ENCODE measurements at regions of chr6 and their contacts with region 1.

Region 1: GRCh38 chr6:131199568-131200272 is 64.5 kb downstream of the AKAP7 start:
- DNase-seq: peak; percentile 29 to 92 (median 80)
- ATAC-seq: peak; percentile 95
- H3K4me3 Mint-ChIP-seq: peak overlapping the region; percentile 72 to 88 (median 81)
- H3K27ac Mint-ChIP-seq: peak overlapping the region; percentile 92 to 99 (median 98)
- H3K4me1 Mint-ChIP-seq: peaks cover 32 to 61% (median 58%) of the 10 kb centered on the region in 4 donors
- H3K27me3 Mint-ChIP-seq: no peaks in the 10 kb centered on the region

Region 2: DNA sequence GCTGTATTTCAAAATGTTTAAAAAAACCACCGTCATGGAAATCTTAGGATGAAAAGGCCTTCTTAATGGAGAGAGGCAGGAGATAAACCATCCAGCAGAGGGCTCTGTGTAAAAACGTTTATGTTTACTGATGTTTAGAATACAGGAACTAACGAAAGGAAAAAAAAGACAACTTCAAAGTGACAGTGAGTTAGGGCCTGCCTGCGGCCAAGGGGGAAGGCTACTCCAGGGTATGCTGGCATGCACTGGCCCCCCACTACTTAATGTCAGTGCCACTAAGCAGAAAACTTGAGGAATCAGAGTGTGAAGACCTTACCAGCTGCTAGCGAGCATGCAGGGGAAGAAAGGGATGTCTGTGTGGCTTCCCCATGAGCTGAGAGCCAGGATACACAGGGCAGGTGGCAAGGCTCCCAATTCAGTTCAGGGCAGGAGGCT is 16.7 kb before region 1 on chr6:
- POLR2A ChIA-PET with region 1: interaction called, 49 read pairs
- DNase-seq: peak in 6 of 10 donors; percentile 22 to 63 (median 48)
- ATAC-seq: peak; percentile 71 to 93
- H3K4me3 Mint-ChIP-seq: peak overlapping the region; percentile 61 to 88 (median 78)
- H3K27ac Mint-ChIP-seq: peak overlapping the region; percentile 76 to 99 (median 91)
- H3K4me1 Mint-ChIP-seq: peaks cover 7 to 12% (median 11%) of the 10 kb centered on the region in 4 donors
- H3K27me3 Mint-ChIP-seq: no peaks in the 10 kb centered on the region

Region 3: GRCh38 chr6:131257104-131257503 is 57.4 kb after region 1 on chr6:
- POLR2A ChIA-PET with region 1: no interaction called
- DNase-seq: no peak
- ATAC-seq: no peak
- H3K4me3 Mint-ChIP-seq: no peak overlapping the region
- H3K27ac Mint-ChIP-seq: peak overlapping the region in 3 of 10 donors; percentile 43 to 85 (median 58)
- H3K4me1 Mint-ChIP-seq: peaks cover 26 to 53% (median 40%) of the 10 kb centered on the region in 4 donors
- H3K27me3 Mint-ChIP-seq: no peaks in the 10 kb centered on the region

Region 4: GRCh38 chr6:131281471-131282270 is 82.0 kb after region 1 on chr6:
- POLR2A ChIA-PET with region 1: interaction called, 53 read pairs
- DNase-seq: peak; percentile 36 to 91 (median 73)
- ATAC-seq: peak; percentile 97
- H3K4me3 Mint-ChIP-seq: peak overlapping the region; percentile 73 to 90 (median 82)
- H3K27ac Mint-ChIP-seq: peak overlapping the region; percentile 97 to 100 (median 98)
- H3K4me1 Mint-ChIP-seq: peaks cover 22 to 69% (median 52%) of the 10 kb centered on the region in 4 donors
- H3K27me3 Mint-ChIP-seq: no peaks in the 10 kb centered on the region

Region 5: GRCh38 chr6:131519670-131520436 is 320.1 kb after region 1 on chr6:
- POLR2A ChIA-PET with region 1: interaction called, 15 read pairs
- DNase-seq: peak in 9 of 10 donors; percentile 21 to 72 (median 54)
- ATAC-seq: peak; percentile 94 to 95
- H3K4me3 Mint-ChIP-seq: peak overlapping the region in 3 of 10 donors; percentile 3 to 39 (median 9)
- H3K27ac Mint-ChIP-seq: peak overlapping the region in 8 of 10 donors; percentile 5 to 83 (median 57)
- H3K4me1 Mint-ChIP-seq: peaks cover 18 to 24% (median 20%) of the 10 kb centered on the region in 4 donors
- H3K27me3 Mint-ChIP-seq: no peaks in the 10 kb centered on the region

Region 6: GRCh38 chr6:131532580-131533039 is 332.9 kb after region 1 on chr6:
- POLR2A ChIA-PET with region 1: interaction called, 12 read pairs
- DNase-seq: no peak
- ATAC-seq: peak; percentile 36 to 37
- H3K4me3 Mint-ChIP-seq: peak overlapping the region in 6 of 10 donors; percentile 10 to 58 (median 25)
- H3K27ac Mint-ChIP-seq: peak overlapping the region; percentile 65 to 97 (median 92)
- H3K4me1 Mint-ChIP-seq: peaks cover 33 to 67% (median 57%) of the 10 kb centered on the region in 4 donors
- H3K27me3 Mint-ChIP-seq: peaks cover 0 to 3% (median 0%) of the 10 kb centered on the region in 5 donors

Measured in naive thymus-derived CD8-positive, alpha-beta T cell (primary cell).